Activated CD4-positive, alpha-beta memory T cell treated with anti-CD3 and anti-CD28 coated beads for 36 hours (primary cell): ENCODE measurements at regions of chrX and their contacts with region 1.

Region 1: DNA sequence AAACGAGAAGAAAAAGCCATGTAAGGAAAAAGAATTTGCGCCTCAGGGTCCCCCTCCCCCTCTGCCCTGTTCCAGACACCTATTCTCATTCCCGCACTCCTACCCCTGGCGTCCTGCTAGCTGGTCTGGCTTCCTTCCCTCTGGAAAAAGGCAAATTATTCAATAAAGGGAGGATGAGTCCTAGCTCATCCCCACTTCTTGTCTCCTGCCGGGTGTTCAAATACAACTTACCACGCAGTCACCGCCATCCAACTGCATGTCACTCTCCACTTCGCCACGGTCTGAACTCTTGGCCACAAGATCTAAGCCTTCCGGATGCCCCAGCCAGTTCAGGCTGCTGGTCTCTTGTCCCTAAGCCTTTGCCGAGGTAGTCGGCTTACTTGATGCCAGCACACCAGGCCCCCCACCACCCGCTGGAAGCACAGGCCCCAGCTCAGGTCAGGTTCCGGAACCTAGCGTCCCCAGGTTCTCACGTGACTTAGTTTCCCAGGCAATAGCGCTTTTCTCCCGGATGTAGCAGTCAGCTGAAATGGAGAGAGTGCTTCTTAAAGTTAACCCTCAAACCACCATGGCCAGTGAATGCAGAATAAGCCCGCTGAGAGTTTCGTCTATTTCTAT is 209.6 kb upstream of the SPIN4 start:
- DNase-seq: peak; percentile 69
- H3K4me3 Mint-ChIP-seq: peak overlapping the region; percentile 97
- H3K27ac Mint-ChIP-seq: peak overlapping the region; percentile 74
- H3K4me1 Mint-ChIP-seq: peaks cover 15% of the 10 kb centered on the region
- H3K27me3 Mint-ChIP-seq: no peaks in the 10 kb centered on the region

Region 2: DNA sequence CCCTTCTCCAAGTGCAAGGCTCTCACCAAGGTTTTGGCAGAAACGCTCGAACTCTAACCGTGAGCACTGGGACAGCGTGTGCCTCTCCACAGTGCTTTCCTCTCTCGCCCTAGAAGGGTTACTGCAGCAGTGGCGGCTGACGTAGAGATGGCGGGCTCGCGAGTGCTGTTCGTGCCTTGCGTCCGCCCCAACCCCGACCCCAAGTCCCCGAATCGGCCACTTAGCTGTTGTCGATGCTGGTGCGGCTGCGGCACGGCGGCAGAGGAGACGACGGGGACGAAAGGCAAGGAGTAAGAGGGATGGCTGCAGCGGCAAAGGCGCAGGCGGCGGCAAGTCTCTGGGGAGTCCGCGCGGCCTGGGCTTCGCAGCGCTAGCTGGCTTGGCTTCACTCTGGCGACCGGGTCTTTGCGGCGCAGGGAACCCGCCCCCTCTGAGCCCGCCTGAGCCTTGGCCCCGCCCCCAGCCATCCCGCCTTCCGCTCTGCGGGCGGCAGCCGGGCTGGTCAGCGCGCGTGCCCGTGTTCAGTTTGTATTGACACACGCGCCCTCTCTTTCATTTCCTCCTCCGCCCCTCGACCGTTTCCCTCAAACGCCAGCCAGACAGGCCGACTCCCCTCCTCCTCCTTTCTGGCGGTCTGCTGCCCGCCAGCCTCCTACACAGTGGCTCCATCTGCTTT is 209.6 kb before region 1 on chrX and contains the start of gene SPIN4:
- CTCF ChIA-PET with region 1: no interaction called
- POLR2A ChIA-PET with region 1: no interaction called
- intact Hi-C with region 1: loop called (anchors 1 kb)
- DNase-seq: peak; percentile 79
- H3K4me3 Mint-ChIP-seq: peak within 1 kb of the TSS; percentile 86
- H3K27ac Mint-ChIP-seq: peak within 1 kb of the TSS; percentile 23
- H3K4me1 Mint-ChIP-seq: peaks cover 10% of the 10 kb centered on the region
- H3K27me3 Mint-ChIP-seq: no peaks in the 10 kb centered on the region
- total RNA-seq, gene SPIN4: 4.4 to 4.5 TPM

Region 3: GRCh38 chrX:63746278-63746677 is 185.6 kb after region 1 on chrX:
- CTCF ChIA-PET with region 1: no interaction called
- POLR2A ChIA-PET with region 1: no interaction called
- intact Hi-C with region 1: loop called (anchors 5 kb)
- DNase-seq: peak; percentile 48
- H3K4me3 Mint-ChIP-seq: no peak overlapping the region
- H3K27ac Mint-ChIP-seq: peak overlapping the region; percentile 81
- H3K4me1 Mint-ChIP-seq: peaks cover 18% of the 10 kb centered on the region
- H3K27me3 Mint-ChIP-seq: no peaks in the 10 kb centered on the region

Region 4: GRCh38 chrX:64205735-64206491 is 645.2 kb after region 1 on chrX:
- CTCF ChIA-PET with region 1: no interaction called
- POLR2A ChIA-PET with region 1: no interaction called
- intact Hi-C with region 1: loop called (anchors 10 kb)
- DNase-seq: peak; percentile 92
- H3K4me3 Mint-ChIP-seq: peak overlapping the region; percentile 81
- H3K27ac Mint-ChIP-seq: peak overlapping the region; percentile 91
- H3K4me1 Mint-ChIP-seq: peaks cover 7% of the 10 kb centered on the region
- H3K27me3 Mint-ChIP-seq: no peaks in the 10 kb centered on the region